ENCODE measurements at regions of chr11 and their contacts with region 1.

Region 1: DNA sequence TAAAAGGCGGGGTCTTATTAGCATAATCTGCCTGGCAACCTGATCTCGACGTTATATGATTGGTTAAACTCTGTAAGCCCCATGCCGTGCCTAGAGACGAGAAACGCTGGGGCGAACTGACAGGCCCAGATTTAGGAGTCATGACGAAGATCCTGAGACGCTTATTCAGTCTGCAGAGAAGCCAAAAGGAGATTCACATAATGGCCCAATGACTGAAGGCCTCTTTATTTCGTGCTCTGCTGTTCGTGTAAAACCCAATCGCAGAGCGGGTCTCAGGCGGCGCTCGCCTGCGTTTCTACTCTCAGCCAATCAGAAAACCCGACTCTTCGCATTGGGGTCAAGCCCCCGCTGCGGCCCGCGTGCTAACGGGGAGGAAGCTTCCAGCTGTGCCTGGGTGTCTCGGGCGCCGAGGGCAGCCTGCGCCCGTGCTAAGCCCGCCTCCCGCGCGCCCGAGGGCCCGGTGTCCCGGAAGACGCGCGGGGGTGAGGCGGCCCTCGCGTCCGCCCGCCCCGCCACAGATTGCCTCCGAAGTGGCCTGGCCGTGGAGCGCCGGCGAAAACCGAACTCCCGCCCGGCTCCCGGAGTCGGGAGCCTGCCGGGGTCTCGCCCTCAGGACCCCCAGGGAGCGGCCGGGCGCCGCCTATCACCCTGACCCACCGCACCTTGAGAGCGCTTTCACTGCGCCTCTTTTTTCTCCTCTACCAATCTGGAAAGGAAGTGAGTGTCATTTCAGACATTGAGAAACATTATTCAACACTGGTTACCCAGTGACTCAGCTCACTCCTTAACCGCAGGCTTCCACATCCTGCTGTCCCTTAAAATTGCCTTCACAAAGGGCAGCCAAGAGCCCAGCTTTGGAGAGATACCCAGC is 446 bp upstream of the PRDM10 start:
- DNase-seq: peak; percentile 81
- ATAC-seq: peak; percentile 71
- H3K4me3 Mint-ChIP-seq: peak overlapping the region; percentile 99
- H3K27ac Mint-ChIP-seq: peak overlapping the region; percentile 100
- H3K4me1 Mint-ChIP-seq: peaks cover 29% of the 10 kb centered on the region
- H3K27me3 Mint-ChIP-seq: peaks cover 4% of the 10 kb centered on the region
- CTCF ChIP-seq: no peak

Region 2: GRCh38 chr11:129895126-129896041 is 107.7 kb before region 1 on chr11 and contains the start of gene NFRKB:
- CTCF ChIA-PET with region 1: no interaction called
- POLR2A ChIA-PET with region 1: interaction called, 8 read pairs
- intact Hi-C with region 1: loop called (anchors 1 kb)
- DNase-seq: peak; percentile 92
- ATAC-seq: peak; percentile 97
- H3K4me3 Mint-ChIP-seq: peak within 1 kb of the TSS; percentile 88
- H3K27ac Mint-ChIP-seq: peak within 1 kb of the TSS; percentile 70
- H3K4me1 Mint-ChIP-seq: peaks cover 19% of the 10 kb centered on the region
- H3K27me3 Mint-ChIP-seq: no peaks in the 10 kb centered on the region
- CTCF ChIP-seq: no peak
- total RNA-seq, gene NFRKB: 27.2 and 28.9 TPM in 2 replicates

Region 3: DNA sequence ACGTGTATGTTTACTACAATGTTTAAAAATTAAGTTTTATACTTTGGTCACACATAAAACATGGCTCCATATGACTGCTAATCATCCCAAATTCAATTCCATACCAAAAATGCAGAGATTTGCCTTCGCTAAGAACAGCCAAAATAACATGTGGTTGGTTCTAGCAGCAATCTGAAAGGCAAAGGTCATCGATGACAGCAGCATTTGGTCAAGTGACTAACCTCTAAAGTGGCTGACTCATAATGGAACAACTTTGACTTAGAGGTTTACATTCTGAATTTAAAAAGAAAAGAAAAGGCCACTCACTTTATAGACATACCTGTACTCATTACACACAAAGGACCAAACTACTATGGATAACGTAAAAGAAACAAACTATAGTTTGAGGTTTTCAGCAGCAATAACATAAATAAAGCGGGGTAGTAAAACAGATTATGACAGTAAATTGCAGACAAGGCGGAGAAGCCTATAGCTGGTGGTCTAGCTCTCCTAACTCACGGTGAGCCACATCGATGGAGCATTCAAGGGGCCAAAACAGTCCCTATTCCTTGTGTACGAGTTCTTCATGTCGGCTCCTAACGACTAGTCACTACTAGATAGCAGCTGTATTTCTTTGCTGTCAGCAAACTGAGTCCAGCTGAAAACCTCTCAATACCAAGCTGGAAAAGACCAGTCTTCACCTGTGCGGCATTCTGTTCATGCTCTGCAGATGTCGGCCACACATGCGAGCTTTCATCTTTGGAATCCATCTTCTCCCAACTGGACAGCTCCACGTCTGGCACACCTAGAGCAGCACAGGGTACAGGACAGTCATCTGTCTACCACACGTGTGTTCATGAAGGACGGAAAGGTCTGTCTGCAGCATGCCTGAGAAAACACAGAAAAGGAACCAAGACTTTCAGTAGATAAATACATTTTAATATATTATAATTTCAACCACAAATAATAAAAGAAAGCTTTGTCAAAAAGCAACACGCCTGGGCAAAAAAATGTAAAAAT is 42.6 kb before region 1 on chr11:
- CTCF ChIA-PET with region 1: no interaction called
- POLR2A ChIA-PET with region 1: interaction called, 17 read pairs
- intact Hi-C with region 1: loop called (anchors 2 kb)
- DNase-seq: no peak
- ATAC-seq: peak; percentile 60
- H3K4me3 Mint-ChIP-seq: peak overlapping the region; percentile 39
- H3K27ac Mint-ChIP-seq: peak overlapping the region; percentile 47
- H3K4me1 Mint-ChIP-seq: peaks cover 16% of the 10 kb centered on the region
- H3K27me3 Mint-ChIP-seq: no peaks in the 10 kb centered on the region
- CTCF ChIP-seq: no peak

Region 4: DNA sequence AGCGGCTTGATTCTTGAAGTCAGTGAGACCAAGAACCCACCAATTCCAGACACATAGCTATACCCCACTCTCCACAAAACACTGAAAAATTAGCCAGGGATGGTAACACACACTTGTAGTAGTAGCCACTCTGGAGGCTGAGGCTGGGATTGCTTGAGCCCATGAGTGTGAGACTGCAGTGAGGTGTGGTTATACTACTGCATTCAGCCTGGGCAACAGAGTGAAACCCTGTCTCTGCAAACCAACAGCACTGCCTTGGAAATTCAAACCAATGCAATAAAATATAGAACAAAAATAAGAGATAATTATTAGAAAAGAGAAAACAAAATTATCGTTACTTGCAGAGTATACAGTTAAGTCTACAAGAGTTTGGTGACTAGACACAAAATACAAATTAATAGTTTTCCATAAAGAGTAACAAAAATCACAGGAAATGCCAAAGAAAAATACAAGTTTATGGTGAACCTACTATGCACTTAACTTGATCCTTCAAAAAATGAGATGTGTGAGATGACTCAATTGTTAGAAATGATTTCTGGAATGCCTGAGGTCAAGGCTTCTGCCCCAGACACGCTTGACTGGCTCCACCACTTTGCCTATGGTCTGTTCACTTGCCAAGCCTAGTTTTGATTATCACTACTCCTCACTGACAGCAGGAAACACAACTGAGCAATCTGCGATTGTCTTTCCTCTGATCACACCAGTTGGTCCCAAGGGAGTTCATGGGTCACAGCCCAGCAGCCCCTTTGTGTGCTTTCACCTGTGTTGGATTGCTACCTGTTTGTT is 19.9 kb after region 1 on chr11:
- CTCF ChIA-PET with region 1: no interaction called
- POLR2A ChIA-PET with region 1: interaction called, 8 read pairs
- intact Hi-C with region 1: loop called (anchors 2 kb)
- DNase-seq: no peak
- ATAC-seq: peak; percentile 81
- H3K4me3 Mint-ChIP-seq: no peak overlapping the region
- H3K27ac Mint-ChIP-seq: no peak overlapping the region
- H3K4me1 Mint-ChIP-seq: peaks cover 15% of the 10 kb centered on the region
- H3K27me3 Mint-ChIP-seq: peaks cover 42% of the 10 kb centered on the region
- CTCF ChIP-seq: no peak

Region 5: GRCh38 chr11:130118636-130119387 is 115.7 kb after region 1 on chr11:
- CTCF ChIA-PET with region 1: no interaction called
- POLR2A ChIA-PET with region 1: interaction called, 28 read pairs
- intact Hi-C with region 1: loop called (anchors 1 kb)
- DNase-seq: peak; percentile 26
- ATAC-seq: peak; percentile 69
- H3K4me3 Mint-ChIP-seq: peak overlapping the region; percentile 22
- H3K27ac Mint-ChIP-seq: peak overlapping the region; percentile 75
- H3K4me1 Mint-ChIP-seq: peaks cover 93% of the 10 kb centered on the region
- H3K27me3 Mint-ChIP-seq: no peaks in the 10 kb centered on the region
- CTCF ChIP-seq: no peak

Region 6: GRCh38 chr11:130159657-130160497 is 156.8 kb after region 1 on chr11 and contains the start of gene ST14:
- CTCF ChIA-PET with region 1: no interaction called
- POLR2A ChIA-PET with region 1: interaction called, 26 read pairs
- intact Hi-C with region 1: no loop called
- DNase-seq: peak; percentile 54
- ATAC-seq: peak; percentile 77
- H3K4me3 Mint-ChIP-seq: peak within 1 kb of the TSS; percentile 89
- H3K27ac Mint-ChIP-seq: peak within 1 kb of the TSS; percentile 81
- H3K4me1 Mint-ChIP-seq: peaks cover 51% of the 10 kb centered on the region
- H3K27me3 Mint-ChIP-seq: no peaks in the 10 kb centered on the region
- CTCF ChIP-seq: no peak
- total RNA-seq, gene ST14: 22.6 and 23.9 TPM in 2 replicates

Region 7: GRCh38 chr11:130916238-130916855 is 913.3 kb after region 1 on chr11 and contains the start of gene SNX19:
- CTCF ChIA-PET with region 1: no interaction called
- POLR2A ChIA-PET with region 1: interaction called, 20 read pairs
- intact Hi-C with region 1: loop called (anchors 10 kb)
- DNase-seq: peak; percentile 94
- ATAC-seq: peak; percentile 99
- H3K4me3 Mint-ChIP-seq: peak within 1 kb of the TSS; percentile 86
- H3K27ac Mint-ChIP-seq: peak within 1 kb of the TSS; percentile 87
- H3K4me1 Mint-ChIP-seq: peaks cover 37% of the 10 kb centered on the region
- H3K27me3 Mint-ChIP-seq: peaks cover 18% of the 10 kb centered on the region
- CTCF ChIP-seq: peak; percentile 84
- total RNA-seq, gene SNX19: 53.7 and 60.4 TPM in 2 replicates